ENCODE measurements at regions of chr7 and their contacts with region 1.

Region 1: GRCh38 chr7:138459413-138460175 is 465 bp upstream of the TRIM24 start:
- DNase-seq: peak; percentile 98
- H3K4me3 Mint-ChIP-seq: peak overlapping the region; percentile 90
- H3K27ac Mint-ChIP-seq: peak overlapping the region; percentile 65
- H3K4me1 Mint-ChIP-seq: peaks cover 25% of the 10 kb centered on the region
- H3K27me3 Mint-ChIP-seq: no peaks in the 10 kb centered on the region

Region 2: GRCh38 chr7:138002096-138002827 is 457.3 kb before region 1 on chr7:
- CTCF ChIA-PET with region 1: interaction called, 5 read pairs
- POLR2A ChIA-PET with region 1: no interaction called
- intact Hi-C with region 1: loop called (anchors 1 kb)
- DNase-seq: peak; percentile 98
- H3K4me3 Mint-ChIP-seq: peak overlapping the region; percentile 94
- H3K27ac Mint-ChIP-seq: peak overlapping the region; percentile 87
- H3K4me1 Mint-ChIP-seq: peaks cover 31% of the 10 kb centered on the region
- H3K27me3 Mint-ChIP-seq: no peaks in the 10 kb centered on the region

Region 3: GRCh38 chr7:138608275-138608674 is 148.7 kb after region 1 on chr7:
- CTCF ChIA-PET with region 1: no interaction called
- POLR2A ChIA-PET with region 1: no interaction called
- intact Hi-C with region 1: loop called (anchors 5 kb)
- DNase-seq: peak; percentile 80
- H3K4me3 Mint-ChIP-seq: no peak overlapping the region
- H3K27ac Mint-ChIP-seq: peak overlapping the region; percentile 36
- H3K4me1 Mint-ChIP-seq: peaks cover 15% of the 10 kb centered on the region
- H3K27me3 Mint-ChIP-seq: no peaks in the 10 kb centered on the region

Region 4: DNA sequence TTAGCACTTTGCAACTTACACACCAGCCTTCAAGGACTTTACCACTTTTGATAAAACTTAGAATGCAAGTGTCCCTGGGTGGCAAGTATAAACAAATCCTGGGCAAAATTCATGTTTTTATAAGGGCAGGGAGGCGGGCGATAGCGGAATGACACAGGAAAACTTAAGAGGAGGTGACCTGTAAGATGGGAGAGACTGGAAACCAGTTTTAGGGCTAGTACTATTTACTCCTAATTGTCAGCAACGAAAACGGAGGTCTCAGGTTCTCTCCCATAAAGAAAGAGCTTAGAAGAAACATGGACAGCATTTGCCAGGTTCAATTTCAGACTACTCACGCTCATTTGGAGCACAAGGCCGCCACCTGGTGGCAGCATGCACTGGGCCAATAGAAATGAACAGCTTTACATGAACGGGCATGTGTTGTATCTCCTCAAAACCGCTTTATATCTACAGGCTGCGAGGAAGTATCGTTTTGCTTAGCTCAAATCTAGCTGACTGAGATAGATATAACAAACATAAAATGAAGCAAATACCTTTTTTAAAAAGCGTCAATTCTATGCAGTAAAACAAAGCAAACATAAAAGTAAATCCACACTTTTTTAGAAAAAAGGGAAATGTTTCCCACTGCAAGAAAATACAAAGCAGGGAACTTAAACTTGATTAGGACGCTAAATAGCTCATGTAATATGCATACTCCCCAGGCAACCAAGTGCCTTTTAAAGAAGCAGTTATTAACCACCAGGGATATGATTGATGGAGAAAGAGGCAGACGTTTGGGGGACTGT is 279.1 kb after region 1 on chr7:
- CTCF ChIA-PET with region 1: interaction called, 6 read pairs
- POLR2A ChIA-PET with region 1: no interaction called
- intact Hi-C with region 1: loop called (anchors 2 kb)
- DNase-seq: peak; percentile 92
- H3K4me3 Mint-ChIP-seq: no peak overlapping the region
- H3K27ac Mint-ChIP-seq: peak overlapping the region; percentile 23
- H3K4me1 Mint-ChIP-seq: peaks cover 8% of the 10 kb centered on the region
- H3K27me3 Mint-ChIP-seq: no peaks in the 10 kb centered on the region

Region 5: DNA sequence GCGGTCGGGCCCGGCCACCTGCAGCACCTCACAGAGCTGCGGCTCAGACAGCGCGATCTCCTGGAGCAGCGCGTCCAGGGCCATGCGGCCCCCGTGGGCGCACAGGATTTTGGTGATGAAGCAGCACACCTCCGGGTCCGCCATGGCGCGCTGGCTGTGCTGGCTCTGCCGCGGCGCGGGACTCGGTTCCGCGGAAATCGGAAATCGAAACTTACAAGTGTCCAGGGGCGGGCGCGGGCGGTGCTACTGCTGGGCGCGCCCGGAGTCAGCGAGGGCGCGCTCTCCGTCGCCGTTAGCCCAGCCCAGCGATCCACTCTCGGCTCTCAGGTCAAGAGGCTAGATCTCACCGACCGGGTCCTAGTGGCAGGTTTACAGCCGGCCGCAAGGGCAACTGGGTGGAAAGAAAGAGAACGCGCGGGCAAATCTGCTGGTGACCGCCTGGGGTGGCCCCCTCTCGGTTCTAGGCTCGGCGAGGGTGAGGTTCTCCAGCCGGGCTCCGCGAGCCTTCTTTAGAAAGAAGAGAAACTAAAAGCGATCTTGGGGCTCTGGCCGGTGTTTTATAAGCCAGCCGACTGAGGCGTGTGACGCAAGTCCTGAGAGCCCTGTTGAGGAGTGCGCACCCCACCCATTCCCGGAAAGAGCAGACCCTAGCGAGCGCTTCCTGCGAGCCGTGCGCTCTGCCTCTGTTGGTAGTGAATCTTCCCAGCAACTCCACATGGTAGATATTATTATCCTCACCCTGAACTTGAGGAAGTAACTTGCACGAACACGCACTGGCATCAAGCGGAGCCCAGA is 649.8 kb after region 1 on chr7 and contains the start of gene ZC3HAV1:
- CTCF ChIA-PET with region 1: no interaction called
- POLR2A ChIA-PET with region 1: no interaction called
- intact Hi-C with region 1: loop called (anchors 10 kb)
- DNase-seq: peak; percentile 92
- H3K4me3 Mint-ChIP-seq: peak within 1 kb of the TSS; percentile 98
- H3K27ac Mint-ChIP-seq: peak within 1 kb of the TSS; percentile 98
- H3K4me1 Mint-ChIP-seq: peaks cover 28% of the 10 kb centered on the region
- H3K27me3 Mint-ChIP-seq: no peaks in the 10 kb centered on the region
- total RNA-seq, gene ZC3HAV1: 99.3 to 99.6 TPM

Measured in activated CD4-positive, alpha-beta memory T cell treated with anti-CD3 and anti-CD28 coated beads for 36 hours (primary cell).